Transverse colon (tissue), 4 donors: ENCODE measurements at regions of chr9 and their contacts with region 1.

Region 1: DNA sequence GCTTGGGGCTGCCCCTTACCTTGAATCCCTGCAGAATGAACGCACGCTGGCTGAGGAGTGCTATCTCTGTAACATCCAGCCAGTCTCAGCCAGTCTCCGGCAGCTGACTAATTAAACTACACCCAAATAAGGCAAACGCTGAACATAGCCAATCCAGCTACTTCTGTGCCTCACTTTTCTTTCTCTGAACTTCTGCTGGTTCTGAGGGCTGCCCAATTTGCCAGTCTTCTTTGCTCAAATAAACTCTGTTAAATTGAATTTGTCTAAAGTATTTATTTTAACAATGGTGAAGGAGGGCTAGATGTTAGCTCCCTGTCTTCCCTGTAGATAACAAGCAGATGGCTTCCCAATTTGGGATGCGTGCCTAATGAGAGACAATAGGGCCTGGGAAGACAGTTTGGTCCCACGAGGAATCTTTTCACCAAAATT is 154.0 kb upstream of the NFIL3 start:
- DNase-seq: no peak
- H3K4me3 ChIP-seq: no peak overlapping the region
- H3K27ac ChIP-seq: no peak overlapping the region
- H3K4me1 ChIP-seq: peaks cover 0 to 4% (median 0%) of the 10 kb centered on the region in 4 donors
- H3K27me3 ChIP-seq: no peaks in the 10 kb centered on the region
- CTCF ChIP-seq: no peak
- EP300 ChIP-seq: no peak
- POLR2A ChIP-seq: no peak

Region 2: DNA sequence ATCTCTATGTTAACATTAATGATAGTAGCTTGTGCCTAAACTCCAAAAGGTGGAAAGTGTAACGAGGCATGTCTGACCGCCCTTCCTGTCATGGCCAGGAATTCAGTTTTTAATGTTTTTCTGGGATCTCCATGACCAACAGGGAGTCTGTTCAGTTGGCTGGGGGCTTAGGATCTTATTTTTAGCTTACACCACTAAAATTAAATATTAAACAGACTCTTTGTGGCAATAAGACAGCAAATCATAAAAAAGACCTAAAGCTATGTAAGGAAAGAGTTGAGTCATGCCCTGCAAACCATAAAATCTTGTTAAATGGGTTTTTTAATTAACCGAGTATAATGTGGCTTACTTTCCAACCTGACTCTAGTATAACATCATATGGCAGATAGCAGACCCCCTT is 1182.8 kb before region 1 on chr9:
- in situ Hi-C with region 1: no loop called
- intact Hi-C with region 1: loop called (anchors 5 kb)
- DNase-seq: no peak
- H3K4me3 ChIP-seq: no peak overlapping the region
- H3K27ac ChIP-seq: no peak overlapping the region
- H3K4me1 ChIP-seq: no peaks in the 10 kb centered on the region
- H3K27me3 ChIP-seq: no peaks in the 10 kb centered on the region
- CTCF ChIP-seq: no peak
- EP300 ChIP-seq: no peak
- POLR2A ChIP-seq: no peak

Region 3: GRCh38 chr9:91536211-91536691 is 41.4 kb before region 1 on chr9:
- in situ Hi-C with region 1: no loop called
- intact Hi-C with region 1: loop called (anchors 2 kb)
- DNase-seq: peak; percentile 72
- H3K4me3 ChIP-seq: no peak overlapping the region
- H3K27ac ChIP-seq: no peak overlapping the region
- H3K4me1 ChIP-seq: peaks cover 0 to 12% (median 0%) of the 10 kb centered on the region in 4 donors
- H3K27me3 ChIP-seq: no peaks in the 10 kb centered on the region
- CTCF ChIP-seq: no peak
- EP300 ChIP-seq: no peak
- POLR2A ChIP-seq: no peak